Naive thymus-derived CD4-positive, alpha-beta T cell (primary cell): ENCODE measurements at regions of chr3 and their contacts with region 1.

Region 1: DNA sequence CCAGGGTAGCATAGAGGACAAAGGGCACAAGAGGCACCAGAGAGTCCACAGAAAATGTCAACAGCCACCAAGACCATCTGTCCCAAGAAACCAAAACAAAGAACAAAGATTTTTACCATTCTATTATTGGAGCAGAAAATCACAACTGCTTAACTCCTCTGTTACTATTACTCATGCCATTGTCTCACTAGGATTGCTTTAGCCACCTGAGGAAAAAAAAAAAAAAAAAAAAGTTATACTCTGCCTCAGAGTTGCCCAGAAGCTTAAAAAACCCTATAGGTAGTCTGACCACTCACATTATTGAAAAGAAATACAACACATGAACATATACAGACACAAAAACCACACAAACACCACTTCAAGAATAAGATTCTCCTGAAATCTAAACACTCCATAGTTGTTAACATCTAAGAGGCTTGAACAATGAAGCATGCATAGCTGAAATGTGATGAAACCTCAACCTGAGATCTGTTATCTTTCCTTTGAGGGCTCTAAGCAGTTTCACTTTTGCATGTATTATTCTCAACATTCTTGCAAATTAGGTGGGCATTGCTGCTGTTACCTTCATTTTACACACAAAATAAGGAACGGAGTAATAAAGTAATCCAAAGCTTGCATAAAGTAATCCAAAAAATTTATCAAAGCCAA is 85.4 kb downstream of the IGSF11 start:
- DNase-seq: peak in 7 of 9 donors; percentile 19 to 54 (median 40)
- ATAC-seq: peak; percentile 85
- H3K4me3 ChIP-seq: no peak overlapping the region
- H3K4me3 Mint-ChIP-seq: peak overlapping the region; percentile 31 to 91 (median 74)
- H3K27ac ChIP-seq: no peak overlapping the region
- H3K27ac Mint-ChIP-seq: peak overlapping the region; percentile 61 to 91 (median 83)
- H3K4me1 ChIP-seq: peaks cover 6 to 31% of the 10 kb centered on the region in 2 donors
- H3K4me1 Mint-ChIP-seq: peaks cover 19 to 78% (median 63%) of the 10 kb centered on the region in 7 donors
- H3K27me3 ChIP-seq: no peaks in the 10 kb centered on the region
- H3K27me3 Mint-ChIP-seq: peaks cover 0 to 13% (median 0%) of the 10 kb centered on the region in 5 donors

Region 2: DNA sequence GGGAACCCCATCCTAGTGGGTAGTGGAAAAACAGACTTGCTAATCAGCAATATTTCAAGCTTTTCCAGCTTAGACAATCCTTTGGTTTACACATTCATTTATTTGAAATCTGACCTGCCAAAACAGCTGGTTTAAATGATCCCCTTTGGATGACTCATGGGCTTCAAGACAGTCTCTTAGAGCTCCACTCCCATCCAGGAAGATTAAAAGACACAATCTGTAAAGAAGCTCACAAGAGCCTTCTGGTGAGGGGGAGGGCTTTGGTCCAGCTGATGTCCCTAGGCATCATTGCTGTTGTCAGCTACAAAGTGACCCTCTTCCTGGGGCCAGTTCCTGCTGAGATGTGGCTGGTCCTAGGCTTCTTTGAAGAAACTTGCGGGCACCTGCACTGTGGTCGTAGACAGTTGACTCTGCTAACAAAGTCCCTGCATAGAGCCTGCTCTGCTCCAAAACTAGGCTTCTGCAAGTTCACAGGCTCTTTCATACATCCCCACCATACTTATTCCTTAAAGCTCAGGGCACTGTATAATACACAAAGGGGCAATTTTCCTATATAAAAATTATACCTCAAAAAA is 11.7 kb after region 1 on chr3:
- CTCF ChIA-PET with region 1: interaction called, 3 read pairs
- POLR2A ChIA-PET with region 1: no interaction called
- intact Hi-C with region 1: loop called in 1 of 2 experiments (anchors 1 kb)
- DNase-seq: no peak
- ATAC-seq: no peak
- H3K4me3 ChIP-seq: no peak overlapping the region
- H3K4me3 Mint-ChIP-seq: no peak overlapping the region
- H3K27ac ChIP-seq: no peak overlapping the region
- H3K27ac Mint-ChIP-seq: no peak overlapping the region
- H3K4me1 ChIP-seq: peaks cover 9 to 19% of the 10 kb centered on the region in 2 donors
- H3K4me1 Mint-ChIP-seq: peaks cover 13 to 34% (median 29%) of the 10 kb centered on the region in 7 donors
- H3K27me3 ChIP-seq: no peaks in the 10 kb centered on the region
- H3K27me3 Mint-ChIP-seq: peaks cover 0 to 25% (median 4%) of the 10 kb centered on the region in 5 donors

Region 3: GRCh38 chr3:118973050-118973449 is 23.8 kb after region 1 on chr3:
- CTCF ChIA-PET with region 1: no interaction called
- POLR2A ChIA-PET with region 1: no interaction called
- intact Hi-C with region 1: no loop called
- DNase-seq: no peak
- ATAC-seq: no peak
- H3K4me3 ChIP-seq: no peak overlapping the region
- H3K4me3 Mint-ChIP-seq: no peak overlapping the region
- H3K27ac ChIP-seq: no peak overlapping the region
- H3K27ac Mint-ChIP-seq: no peak overlapping the region
- H3K4me1 ChIP-seq: no peaks in the 10 kb centered on the region
- H3K4me1 Mint-ChIP-seq: peaks cover 0 to 15% (median 7%) of the 10 kb centered on the region in 7 donors
- H3K27me3 ChIP-seq: no peaks in the 10 kb centered on the region
- H3K27me3 Mint-ChIP-seq: peaks cover 0 to 5% (median 0%) of the 10 kb centered on the region in 5 donors